CD4-positive, alpha-beta T cell (primary cell): ENCODE measurements at regions of chr17 and their contacts with region 1.

Region 1: GRCh38 chr17:40559954-40560591 is 5.2 kb downstream of the CCR7 start:
- DNase-seq: peak; percentile 74 to 90 (median 80)
- ATAC-seq: peak; percentile 33
- H3K4me3 ChIP-seq: peak overlapping the region; percentile 97
- H3K4me3 Mint-ChIP-seq: peak overlapping the region; percentile 91
- H3K27ac ChIP-seq: peak overlapping the region; percentile 92 to 100
- H3K27ac Mint-ChIP-seq: peak overlapping the region; percentile 92
- H3K4me1 ChIP-seq: peaks cover 97% of the 10 kb centered on the region
- H3K4me1 Mint-ChIP-seq: peaks cover 90% of the 10 kb centered on the region
- H3K27me3 ChIP-seq: no peaks in the 10 kb centered on the region
- H3K27me3 Mint-ChIP-seq: no peaks in the 10 kb centered on the region
- CTCF ChIP-seq: peak; percentile 97

Region 2: GRCh38 chr17:40340880-40341807 is 218.9 kb before region 1 on chr17:
- CTCF ChIA-PET with region 1: no interaction called
- POLR2A ChIA-PET with region 1: no interaction called
- intact Hi-C with region 1: no loop called
- DNase-seq: peak; percentile 76 to 96 (median 85)
- ATAC-seq: peak; percentile 78
- H3K4me3 ChIP-seq: peak overlapping the region; percentile 72
- H3K4me3 Mint-ChIP-seq: peak overlapping the region; percentile 83
- H3K27ac ChIP-seq: peak overlapping the region; percentile 73 to 90
- H3K27ac Mint-ChIP-seq: peak overlapping the region; percentile 93
- H3K4me1 ChIP-seq: peaks cover 89% of the 10 kb centered on the region
- H3K4me1 Mint-ChIP-seq: peaks cover 76% of the 10 kb centered on the region
- H3K27me3 ChIP-seq: no peaks in the 10 kb centered on the region
- H3K27me3 Mint-ChIP-seq: no peaks in the 10 kb centered on the region
- CTCF ChIP-seq: peak; percentile 55

Region 3: DNA sequence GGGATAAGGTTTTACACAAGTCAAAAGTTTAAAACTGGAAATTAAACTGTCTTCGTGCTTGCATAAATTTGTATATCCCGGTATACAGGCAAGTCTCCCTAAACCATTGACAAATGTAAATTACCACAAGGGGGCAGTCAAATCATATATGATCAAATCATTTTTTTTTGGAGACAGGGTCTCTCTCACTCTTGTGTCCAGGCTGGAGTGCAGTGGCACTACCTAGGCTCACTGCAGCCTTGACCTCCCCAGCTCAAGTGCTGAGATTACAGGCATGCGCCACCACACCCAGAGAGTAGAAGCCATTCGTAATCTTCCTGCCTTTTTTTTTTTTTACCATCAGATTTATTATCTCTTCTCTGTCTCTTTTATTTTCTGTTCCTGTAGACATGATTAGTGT is 160.9 kb before region 1 on chr17:
- CTCF ChIA-PET with region 1: interaction called, 8 read pairs
- POLR2A ChIA-PET with region 1: interaction called, 4 read pairs
- intact Hi-C with region 1: loop called (anchors 1 kb)
- DNase-seq: peak in 5 of 14 experiments; percentile 7 to 80 (median 52)
- ATAC-seq: peak; percentile 71
- H3K4me3 ChIP-seq: no peak overlapping the region
- H3K4me3 Mint-ChIP-seq: no peak overlapping the region
- H3K27ac ChIP-seq: no peak overlapping the region
- H3K27ac Mint-ChIP-seq: no peak overlapping the region
- H3K4me1 ChIP-seq: peaks cover 3% of the 10 kb centered on the region
- H3K4me1 Mint-ChIP-seq: peaks cover 22% of the 10 kb centered on the region
- H3K27me3 ChIP-seq: no peaks in the 10 kb centered on the region
- H3K27me3 Mint-ChIP-seq: no peaks in the 10 kb centered on the region
- CTCF ChIP-seq: peak; percentile 91

Region 4: DNA sequence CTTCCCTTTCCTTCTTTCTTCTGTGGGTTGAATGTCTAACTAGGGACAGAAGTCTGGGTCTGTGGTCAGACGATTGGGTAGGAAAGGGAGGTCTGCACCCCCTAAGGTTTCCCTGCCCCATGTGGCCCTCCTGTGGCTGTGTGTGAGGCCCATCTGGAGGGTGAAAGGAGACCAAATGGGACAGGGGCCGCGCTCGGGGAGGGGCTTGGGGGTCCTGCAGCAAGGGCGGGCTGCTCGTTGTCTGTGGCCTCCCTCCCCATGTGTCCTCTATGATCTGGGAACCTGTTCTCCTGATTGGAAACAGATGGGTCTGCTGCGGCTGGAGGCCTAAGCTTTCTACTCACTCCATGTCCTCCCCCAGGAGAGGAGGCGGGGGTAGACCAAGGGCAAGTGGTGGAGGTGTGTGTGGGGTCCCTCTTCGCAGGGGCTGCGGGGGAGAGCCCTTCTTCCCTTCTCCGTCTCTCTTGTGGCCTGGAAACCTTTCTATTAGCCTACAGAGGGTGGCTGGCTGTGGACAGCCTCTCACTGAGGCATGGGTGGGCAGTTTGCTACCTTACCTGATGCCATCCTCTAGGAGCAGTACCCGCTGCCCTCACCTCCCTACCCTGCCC is 98.2 kb before region 1 on chr17:
- CTCF ChIA-PET with region 1: no interaction called
- POLR2A ChIA-PET with region 1: no interaction called
- intact Hi-C with region 1: no loop called
- DNase-seq: no peak
- ATAC-seq: no peak
- H3K4me3 ChIP-seq: no peak overlapping the region
- H3K4me3 Mint-ChIP-seq: no peak overlapping the region
- H3K27ac ChIP-seq: no peak overlapping the region
- H3K27ac Mint-ChIP-seq: no peak overlapping the region
- H3K4me1 ChIP-seq: no peaks in the 10 kb centered on the region
- H3K4me1 Mint-ChIP-seq: no peaks in the 10 kb centered on the region
- H3K27me3 ChIP-seq: no peaks in the 10 kb centered on the region
- H3K27me3 Mint-ChIP-seq: no peaks in the 10 kb centered on the region
- CTCF ChIP-seq: no peak

Region 5: DNA sequence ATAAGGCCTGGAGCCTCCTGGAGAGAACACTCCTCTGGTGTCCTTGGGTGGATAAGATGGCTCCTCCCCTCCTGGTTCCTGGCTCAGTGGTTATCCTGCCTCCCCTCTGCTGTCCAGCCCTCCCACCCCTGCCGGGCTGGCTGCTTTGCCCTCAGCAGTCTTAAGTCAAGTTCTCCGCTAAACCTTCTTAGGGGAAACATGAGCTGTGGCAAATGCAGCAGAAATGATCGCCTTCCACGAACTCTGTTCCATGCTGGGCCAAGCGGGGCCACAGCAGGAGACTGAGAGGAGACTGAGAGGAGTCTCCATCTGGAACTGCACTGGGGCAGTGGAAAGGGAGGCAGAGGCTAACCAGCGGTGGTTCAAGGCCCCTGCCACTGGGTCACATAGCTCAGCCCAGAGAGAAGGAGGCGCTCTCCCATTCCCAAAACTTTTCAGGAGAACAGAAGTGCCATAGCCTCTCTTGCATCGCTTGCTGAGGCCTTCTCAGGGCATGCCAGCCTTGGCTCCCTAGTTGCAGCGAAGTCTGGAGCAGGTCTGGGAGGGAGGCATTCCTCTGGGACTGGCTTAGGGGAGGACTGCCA is 85.6 kb before region 1 on chr17:
- CTCF ChIA-PET with region 1: interaction called, 12 read pairs
- POLR2A ChIA-PET with region 1: no interaction called
- intact Hi-C with region 1: no loop called
- DNase-seq: no peak
- ATAC-seq: no peak
- H3K4me3 ChIP-seq: no peak overlapping the region
- H3K4me3 Mint-ChIP-seq: no peak overlapping the region
- H3K27ac ChIP-seq: no peak overlapping the region
- H3K27ac Mint-ChIP-seq: no peak overlapping the region
- H3K4me1 ChIP-seq: peaks cover 40% of the 10 kb centered on the region
- H3K4me1 Mint-ChIP-seq: peaks cover 22% of the 10 kb centered on the region
- H3K27me3 ChIP-seq: no peaks in the 10 kb centered on the region
- H3K27me3 Mint-ChIP-seq: no peaks in the 10 kb centered on the region
- CTCF ChIP-seq: no peak

Region 6: DNA sequence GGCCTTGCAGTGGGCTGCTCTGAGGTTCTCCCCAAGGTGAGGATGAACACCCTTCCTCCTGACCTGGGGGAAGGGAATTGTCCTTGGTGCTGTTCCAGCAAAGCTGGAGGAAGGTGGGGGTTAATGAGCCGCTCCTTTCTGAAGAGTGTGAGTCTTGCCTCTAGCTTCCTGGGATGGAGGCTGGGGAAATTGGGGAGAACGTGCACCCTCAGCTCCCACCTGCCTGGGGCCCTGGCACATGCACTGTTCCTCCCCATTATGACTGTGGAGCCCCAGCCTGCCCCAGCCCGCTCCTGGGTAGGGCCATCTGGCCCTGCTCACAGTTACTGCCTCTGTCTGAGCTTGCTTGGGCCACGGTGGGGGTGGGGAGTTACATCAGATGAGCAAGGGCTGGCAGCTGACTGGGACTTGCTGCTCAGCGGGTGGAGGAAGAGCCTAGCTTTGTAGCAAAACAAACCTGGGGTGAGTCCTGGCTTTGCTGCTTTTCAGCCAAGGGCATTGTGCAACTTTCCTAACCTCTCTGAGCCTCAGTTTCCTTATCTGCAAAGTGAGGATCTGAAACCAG is 69.7 kb before region 1 on chr17:
- CTCF ChIA-PET with region 1: no interaction called
- POLR2A ChIA-PET with region 1: no interaction called
- intact Hi-C with region 1: no loop called
- DNase-seq: peak in 4 of 14 experiments; percentile 11 to 48 (median 26)
- ATAC-seq: no peak
- H3K4me3 ChIP-seq: no peak overlapping the region
- H3K4me3 Mint-ChIP-seq: peak overlapping the region; percentile 48
- H3K27ac ChIP-seq: no peak overlapping the region
- H3K27ac Mint-ChIP-seq: peak overlapping the region; percentile 49
- H3K4me1 ChIP-seq: peaks cover 47% of the 10 kb centered on the region
- H3K4me1 Mint-ChIP-seq: peaks cover 62% of the 10 kb centered on the region
- H3K27me3 ChIP-seq: no peaks in the 10 kb centered on the region
- H3K27me3 Mint-ChIP-seq: no peaks in the 10 kb centered on the region
- CTCF ChIP-seq: no peak

Region 7: DNA sequence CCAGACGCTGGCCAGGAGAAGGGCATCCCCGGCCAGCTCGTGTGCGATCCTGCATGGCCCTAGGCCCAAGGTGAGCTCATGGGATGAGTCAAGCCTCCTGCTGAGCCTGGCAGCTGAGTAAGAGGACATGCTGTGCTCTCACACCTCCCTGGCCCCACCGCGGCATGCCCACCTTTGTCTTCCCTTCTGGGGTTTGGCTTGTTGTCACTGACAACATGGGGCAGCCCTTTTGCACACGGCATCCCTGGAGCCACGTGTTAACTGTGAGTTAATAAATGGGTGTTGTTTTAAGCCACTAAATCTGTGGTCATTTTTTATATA is 49.8 kb before region 1 on chr17:
- CTCF ChIA-PET with region 1: no interaction called
- POLR2A ChIA-PET with region 1: no interaction called
- intact Hi-C with region 1: no loop called
- DNase-seq: no peak
- ATAC-seq: no peak
- H3K4me3 ChIP-seq: no peak overlapping the region
- H3K4me3 Mint-ChIP-seq: no peak overlapping the region
- H3K27ac ChIP-seq: no peak overlapping the region
- H3K27ac Mint-ChIP-seq: no peak overlapping the region
- H3K4me1 ChIP-seq: peaks cover 20% of the 10 kb centered on the region
- H3K4me1 Mint-ChIP-seq: peaks cover 17% of the 10 kb centered on the region
- H3K27me3 ChIP-seq: no peaks in the 10 kb centered on the region
- H3K27me3 Mint-ChIP-seq: no peaks in the 10 kb centered on the region
- CTCF ChIP-seq: no peak

Region 8: DNA sequence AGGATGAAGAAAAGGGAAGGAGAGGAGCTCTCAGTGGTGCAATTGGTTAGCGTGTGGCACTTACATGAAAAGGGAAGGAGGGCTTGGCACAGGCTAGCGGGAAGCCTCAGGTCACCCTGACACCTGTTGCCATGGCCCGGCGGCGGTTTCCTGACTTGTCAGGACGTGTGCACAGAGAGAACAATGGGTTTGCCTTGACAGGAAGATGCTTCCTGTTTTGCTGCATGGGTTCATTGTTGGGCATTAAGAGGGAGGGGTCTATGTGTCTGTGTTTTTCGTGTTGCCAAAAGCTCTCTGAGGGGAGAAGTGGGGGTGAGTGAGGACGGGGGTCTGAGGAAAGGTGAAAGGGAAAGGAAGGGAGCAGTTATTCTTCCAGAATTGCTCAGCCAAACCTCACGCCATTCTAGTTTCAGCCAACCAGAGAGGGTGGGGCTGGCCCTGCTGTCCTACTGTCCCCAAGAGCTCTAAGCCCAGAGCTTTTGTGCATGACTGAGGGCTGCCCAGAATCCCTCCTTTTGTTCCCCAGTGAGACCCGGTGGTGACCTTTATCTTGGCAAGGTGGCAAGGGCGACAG is 22.3 kb after region 1 on chr17:
- CTCF ChIA-PET with region 1: interaction called, 9 read pairs
- POLR2A ChIA-PET with region 1: interaction called, 49 read pairs
- intact Hi-C with region 1: loop called (anchors 1 to 2 kb)
- DNase-seq: peak; percentile 61 to 90 (median 82)
- ATAC-seq: peak; percentile 92
- H3K4me3 ChIP-seq: peak overlapping the region; percentile 21
- H3K4me3 Mint-ChIP-seq: peak overlapping the region; percentile 59
- H3K27ac ChIP-seq: peak overlapping the region; percentile 70 to 82
- H3K27ac Mint-ChIP-seq: peak overlapping the region; percentile 97
- H3K4me1 ChIP-seq: peaks cover 50% of the 10 kb centered on the region
- H3K4me1 Mint-ChIP-seq: peaks cover 93% of the 10 kb centered on the region
- H3K27me3 ChIP-seq: no peaks in the 10 kb centered on the region
- H3K27me3 Mint-ChIP-seq: no peaks in the 10 kb centered on the region
- CTCF ChIP-seq: no peak

Region 9: GRCh38 chr17:40615295-40615988 is 55.4 kb after region 1 on chr17:
- CTCF ChIA-PET with region 1: interaction called, 288 read pairs
- POLR2A ChIA-PET with region 1: interaction called, 1,290 read pairs
- intact Hi-C with region 1: loop called (anchors 1 kb)
- DNase-seq: peak in 9 of 14 experiments; percentile 44 to 89 (median 55)
- ATAC-seq: peak; percentile 35
- H3K4me3 ChIP-seq: no peak overlapping the region
- H3K4me3 Mint-ChIP-seq: peak overlapping the region; percentile 75
- H3K27ac ChIP-seq: peak overlapping the region; percentile 96 to 99
- H3K27ac Mint-ChIP-seq: peak overlapping the region; percentile 98
- H3K4me1 ChIP-seq: peaks cover 83% of the 10 kb centered on the region
- H3K4me1 Mint-ChIP-seq: peaks cover 72% of the 10 kb centered on the region
- H3K27me3 ChIP-seq: no peaks in the 10 kb centered on the region
- H3K27me3 Mint-ChIP-seq: no peaks in the 10 kb centered on the region
- CTCF ChIP-seq: peak; percentile 67

Region 10: DNA sequence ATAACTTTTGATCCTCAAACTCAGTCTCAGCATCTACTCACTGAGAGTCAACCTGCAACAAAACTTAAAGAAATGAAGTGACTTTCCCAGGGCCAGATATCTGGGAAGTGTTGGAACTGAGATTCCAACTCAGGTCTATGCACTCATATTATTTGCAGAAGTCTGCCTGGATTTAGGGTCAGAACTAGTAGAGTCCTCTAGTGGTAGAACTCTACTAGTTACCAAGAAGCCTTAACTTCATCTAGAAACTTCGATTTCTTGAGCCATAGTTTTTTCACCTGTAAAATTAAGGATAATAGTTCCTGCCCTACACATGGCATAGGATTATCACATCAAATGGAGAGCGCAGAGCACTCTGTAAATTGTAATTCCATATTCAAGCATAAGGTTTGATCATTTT is 166.8 kb after region 1 on chr17:
- CTCF ChIA-PET with region 1: no interaction called
- POLR2A ChIA-PET with region 1: no interaction called
- intact Hi-C with region 1: loop called (anchors 5 to 10 kb)
- DNase-seq: peak in 3 of 14 experiments; percentile 29 to 38 (median 33)
- ATAC-seq: no peak
- H3K4me3 ChIP-seq: no peak overlapping the region
- H3K4me3 Mint-ChIP-seq: no peak overlapping the region
- H3K27ac ChIP-seq: no peak overlapping the region
- H3K27ac Mint-ChIP-seq: no peak overlapping the region
- H3K4me1 ChIP-seq: no peaks in the 10 kb centered on the region
- H3K4me1 Mint-ChIP-seq: no peaks in the 10 kb centered on the region
- H3K27me3 ChIP-seq: peaks cover 0 to 24% of the 10 kb centered on the region in 2 experiments
- H3K27me3 Mint-ChIP-seq: peaks cover 41% of the 10 kb centered on the region
- CTCF ChIP-seq: peak; percentile 46